HAP-1 (cell line): ENCODE measurements at regions of chr10 and their contacts with region 1.

Region 1: GRCh38 chr10:43671656-43672531 is 23.2 kb upstream of the ZNF32 start:
- DNase-seq: peak; percentile 53 to 63
- H3K4me3 ChIP-seq: no peak overlapping the region
- H3K4me1 ChIP-seq: no peaks in the 10 kb centered on the region
- H3K27me3 ChIP-seq: no peaks in the 10 kb centered on the region; the same call in 1 of the 2 replicates

Region 2: GRCh38 chr10:42866115-42866995 is 805.5 kb before region 1 on chr10:
- in situ Hi-C with region 1: no loop called
- DNase-seq: peak; percentile 54 to 85
- H3K4me3 ChIP-seq: peak overlapping the region; percentile 10; the same call in 1 of the 2 replicates
- H3K4me1 ChIP-seq: no peaks in the 10 kb centered on the region
- H3K27me3 ChIP-seq: no peaks in the 10 kb centered on the region

Region 3: GRCh38 chr10:44386546-44387052 is 714.7 kb after region 1 on chr10:
- in situ Hi-C with region 1: loop called (anchors 10 kb)
- DNase-seq: peak; percentile 20 to 56
- H3K4me3 ChIP-seq: no peak overlapping the region
- H3K4me1 ChIP-seq: no peaks in the 10 kb centered on the region
- H3K27me3 ChIP-seq: no peaks in the 10 kb centered on the region

Region 4: DNA sequence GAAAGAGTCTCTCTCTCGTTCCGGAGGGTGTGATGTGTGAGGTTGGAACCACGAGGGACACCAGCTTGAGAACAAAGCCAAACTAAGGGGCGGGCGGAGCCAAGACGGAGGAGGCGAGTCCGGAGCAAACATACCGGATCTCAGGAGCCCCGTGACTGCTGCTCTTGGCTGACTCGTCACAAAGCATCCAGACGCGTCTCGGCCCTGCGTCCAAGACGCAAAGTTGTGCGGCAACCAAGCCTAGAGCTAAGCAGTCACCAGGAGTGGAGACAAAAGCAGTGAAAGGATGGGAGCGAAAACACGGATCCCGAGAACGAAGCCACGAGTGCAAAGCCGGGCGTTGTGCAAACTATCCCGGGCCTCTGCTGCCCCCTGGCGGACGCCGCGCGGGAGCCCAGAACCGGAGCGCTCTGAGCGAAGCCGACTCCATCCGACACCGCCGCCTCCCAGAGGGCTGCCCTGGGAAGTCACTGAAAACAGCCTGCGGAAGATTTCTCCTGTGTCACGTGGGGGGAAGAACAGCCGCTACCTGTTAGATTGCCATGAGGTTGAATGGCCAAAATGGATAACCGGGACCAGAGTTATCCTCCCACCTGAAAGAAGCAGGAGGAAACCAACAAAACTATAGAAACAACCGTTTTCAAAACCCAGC is 1192.9 kb after region 1 on chr10:
- in situ Hi-C with region 1: loop called (anchors 10 kb)
- DNase-seq: peak; percentile 62 to 94
- H3K4me3 ChIP-seq: peak overlapping the region; percentile 28
- H3K4me1 ChIP-seq: peaks cover 5% of the 10 kb centered on the region
- H3K27me3 ChIP-seq: peaks cover 21% of the 10 kb centered on the region